ENCODE measurements at regions of chr2 and their contacts with region 1.

Region 1: GRCh38 chr2:160269803-160270570 is 69.9 kb upstream of the ITGB6 start:
- DNase-seq: peak; percentile 78
- H3K4me3 ChIP-seq: peak overlapping the region; percentile 26 to 39
- H3K27ac ChIP-seq: peak overlapping the region; percentile 80 to 83
- H3K4me1 ChIP-seq: no peaks in the 10 kb centered on the region
- H3K27me3 ChIP-seq: no peaks in the 10 kb centered on the region
- CTCF ChIP-seq: peak; percentile 45 to 79 (median 62)
- POLR2A ChIP-seq: peak; percentile 31

Region 2: GRCh38 chr2:160406591-160407392 is 136.8 kb after region 1 on chr2:
- intact Hi-C with region 1: loop called (anchors 5 kb)
- DNase-seq: peak; percentile 52
- H3K4me3 ChIP-seq: peak overlapping the region; percentile 84 to 87
- H3K27ac ChIP-seq: peak overlapping the region; percentile 83 to 85
- H3K4me1 ChIP-seq: no peaks in the 10 kb centered on the region
- H3K27me3 ChIP-seq: no peaks in the 10 kb centered on the region
- CTCF ChIP-seq: no peak
- POLR2A ChIP-seq: no peak